ENCODE measurements at regions of chr1 and their contacts with region 1.

Region 1: GRCh38 chr1:173824331-173825081 is at the starts of genes CENPL and DARS2:
- DNase-seq: peak; percentile 78 to 96 (median 90)
- ATAC-seq: peak; percentile 91 to 94 (median 92)
- H3K4me3 ChIP-seq: peak within 1 kb of the TSS; percentile 85
- H3K4me3 Mint-ChIP-seq: peak within 1 kb of the TSS; percentile 94 to 99 (median 96)
- H3K27ac ChIP-seq: peak within 1 kb of the TSS; percentile 81
- H3K27ac Mint-ChIP-seq: peak within 1 kb of the TSS; percentile 94 to 96
- H3K4me1 ChIP-seq: peaks cover 9 to 19% of the 10 kb centered on the region in 2 experiments
- H3K4me1 Mint-ChIP-seq: peaks cover 43 to 60% (median 59%) of the 10 kb centered on the region in 3 donors
- H3K27me3 ChIP-seq: no peaks in the 10 kb centered on the region
- H3K27me3 Mint-ChIP-seq: no peaks in the 10 kb centered on the region
- total RNA-seq, gene CENPL: 8.1 to 12.7 (median 10.3) TPM
- total RNA-seq, gene DARS2: 4.9 to 14.1 (median 13.6) TPM

Region 2: DNA sequence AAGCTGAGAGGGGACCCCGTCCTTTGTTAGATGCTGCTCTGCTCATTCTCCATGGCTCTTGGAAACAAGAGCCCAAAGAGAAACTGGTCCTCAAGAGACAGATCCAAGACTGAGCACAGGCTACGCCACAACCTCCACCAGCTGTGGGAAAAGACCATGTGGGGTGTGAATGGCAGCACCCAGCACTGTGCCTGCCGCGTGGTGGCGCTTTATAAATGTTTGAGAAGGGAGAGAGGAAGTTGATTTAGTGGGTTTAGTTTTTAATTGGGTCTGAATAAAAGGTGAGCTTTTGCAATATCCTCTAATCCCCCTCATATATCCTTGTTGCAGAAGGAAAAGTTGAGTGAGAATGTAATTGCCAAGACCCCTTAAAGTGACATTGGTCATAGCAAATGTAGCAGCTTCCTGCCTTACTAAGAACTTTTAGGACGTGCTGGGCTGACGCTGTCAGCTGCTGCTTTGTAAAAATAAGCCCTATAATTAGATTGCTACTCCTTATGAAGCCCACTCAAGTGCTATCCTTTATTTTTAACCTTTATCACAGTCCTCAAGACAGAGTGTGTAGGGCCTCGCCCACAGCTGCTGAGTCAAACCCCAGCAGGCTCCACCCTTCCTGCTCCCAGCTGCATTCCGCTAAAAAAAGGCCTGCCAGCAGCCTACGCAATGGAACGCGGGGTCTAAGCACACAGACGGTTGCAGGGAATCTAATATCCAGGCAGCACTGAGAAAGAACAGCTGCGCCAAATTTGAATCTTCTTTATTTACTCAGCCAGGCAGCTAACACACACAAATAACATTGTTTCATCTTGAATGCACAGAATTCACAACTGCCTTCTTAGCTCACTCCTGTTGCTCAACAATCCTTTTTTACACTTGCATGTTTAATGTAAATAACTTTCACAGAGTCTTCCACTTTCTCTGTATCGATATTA is 394.8 kb before region 1 on chr1:
- CTCF ChIA-PET with region 1: interaction called, 8 to 49 read pairs
- POLR2A ChIA-PET with region 1: no interaction called
- DNase-seq: peak; percentile 44 to 78 (median 64)
- ATAC-seq: peak; percentile 65 to 89 (median 78)
- H3K4me3 ChIP-seq: peak overlapping the region in 1 of 2 donors; percentile 29
- H3K4me3 Mint-ChIP-seq: peak overlapping the region; percentile 1 to 58 (median 48)
- H3K27ac ChIP-seq: no peak overlapping the region
- H3K27ac Mint-ChIP-seq: peak overlapping the region; percentile 80 to 86
- H3K4me1 ChIP-seq: peaks cover 7 to 13% of the 10 kb centered on the region in 2 experiments
- H3K4me1 Mint-ChIP-seq: peaks cover 24 to 27% (median 26%) of the 10 kb centered on the region in 3 donors
- H3K27me3 ChIP-seq: no peaks in the 10 kb centered on the region
- H3K27me3 Mint-ChIP-seq: no peaks in the 10 kb centered on the region

Region 3: DNA sequence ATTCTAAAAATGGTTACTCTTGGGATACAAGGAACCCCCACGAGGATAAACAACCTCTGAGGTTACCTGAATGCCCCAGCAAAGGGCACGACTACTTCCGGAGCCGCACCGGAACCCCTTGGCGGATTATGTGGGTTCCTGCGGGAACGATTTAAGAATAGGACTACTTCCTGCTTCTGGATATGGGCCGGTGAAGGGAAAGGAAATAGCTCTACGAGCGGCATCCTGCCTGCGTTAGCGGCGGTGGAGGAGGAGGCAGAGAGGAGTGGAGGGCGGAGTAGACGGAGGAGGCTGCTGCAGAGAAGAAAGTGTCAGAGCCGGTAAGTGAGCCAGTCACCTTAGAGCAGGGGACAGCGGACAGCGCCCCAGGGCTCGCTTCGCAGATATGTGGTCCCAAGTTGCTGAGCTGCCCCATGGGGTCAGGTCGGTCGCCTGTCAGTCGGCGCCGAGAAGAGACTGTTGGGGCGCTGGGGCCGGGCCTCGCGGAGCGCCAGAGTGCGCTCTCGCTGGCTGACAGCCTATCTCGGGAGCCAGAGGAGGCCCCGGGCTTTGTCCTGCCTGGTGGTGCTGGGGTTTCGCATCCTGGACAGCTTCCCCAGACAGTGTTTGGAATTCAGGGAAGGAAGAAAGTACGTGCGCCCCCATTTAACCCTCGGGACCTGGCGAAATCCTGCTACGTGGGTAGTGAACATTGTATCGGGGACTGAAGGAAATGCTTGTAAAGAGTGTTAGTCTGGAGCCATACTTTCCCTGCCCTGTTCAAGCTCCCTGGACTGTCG is 109.6 kb before region 1 on chr1 and contains the start of gene KLHL20:
- CTCF ChIA-PET with region 1: interaction called in 1 of 2 experiments, 10 read pairs
- POLR2A ChIA-PET with region 1: no interaction called
- DNase-seq: peak; percentile 73 to 92 (median 85)
- ATAC-seq: peak; percentile 97 to 98 (median 98)
- H3K4me3 ChIP-seq: peak within 1 kb of the TSS; percentile 51 to 89
- H3K4me3 Mint-ChIP-seq: peak within 1 kb of the TSS; percentile 91 to 97 (median 96)
- H3K27ac ChIP-seq: peak within 1 kb of the TSS; percentile 87
- H3K27ac Mint-ChIP-seq: peak within 1 kb of the TSS; percentile 96 to 98
- H3K4me1 ChIP-seq: peaks cover 9 to 14% of the 10 kb centered on the region in 2 experiments
- H3K4me1 Mint-ChIP-seq: peaks cover 26 to 36% (median 33%) of the 10 kb centered on the region in 3 donors
- H3K27me3 ChIP-seq: peaks cover 11% of the 10 kb centered on the region in 2 experiments
- H3K27me3 Mint-ChIP-seq: peaks cover 21 to 22% of the 10 kb centered on the region in 2 donors
- total RNA-seq, gene KLHL20: 28.7 to 34.5 (median 31.2) TPM

Measured in T-cell (primary cell).